ENCODE measurements at regions of chr7 and their contacts with region 1.

Region 1: DNA sequence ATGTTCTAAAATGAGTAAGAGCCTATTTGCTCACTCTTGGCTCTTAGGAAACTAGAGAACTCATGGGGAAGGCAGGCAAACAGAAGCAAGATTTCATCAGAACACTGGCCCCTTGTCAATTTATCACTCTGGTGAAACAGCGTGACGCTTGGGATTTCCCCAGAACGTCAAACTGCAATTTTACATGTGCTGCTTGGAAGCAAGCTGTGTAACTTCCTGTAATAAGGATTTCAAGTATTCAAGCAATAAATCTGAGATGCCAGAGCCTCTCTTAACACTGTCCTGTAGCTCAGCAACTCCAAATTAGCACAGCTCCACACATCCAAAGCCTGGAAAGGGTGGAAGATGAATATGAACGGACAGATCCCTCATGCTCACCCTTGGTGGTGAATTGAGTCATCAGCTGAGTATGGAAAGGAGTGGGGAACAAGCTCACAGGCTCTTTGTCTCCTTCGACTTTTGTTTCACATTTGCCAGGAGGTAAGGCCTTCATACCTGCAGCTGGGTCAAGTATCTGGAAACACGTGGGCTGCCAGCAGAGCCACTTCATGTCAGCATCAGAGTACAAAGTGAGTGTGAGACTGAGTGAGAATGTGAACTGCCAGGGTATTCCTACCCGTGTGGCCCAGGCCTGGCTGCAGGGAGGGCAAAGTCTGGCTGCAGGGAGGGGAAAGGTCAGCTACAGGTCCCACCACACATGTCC is 140.4 kb upstream of the NAMPT start:
- DNase-seq: peak in 1 of 2 donors; percentile 99
- H3K4me3 ChIP-seq: no peak overlapping the region
- H3K27ac ChIP-seq: peak overlapping the region; percentile 66
- H3K4me1 ChIP-seq: peaks cover 41% of the 10 kb centered on the region
- H3K27me3 ChIP-seq: no peaks in the 10 kb centered on the region
- CTCF ChIP-seq: no peak
- POLR2A ChIP-seq: no peak

Region 2: DNA sequence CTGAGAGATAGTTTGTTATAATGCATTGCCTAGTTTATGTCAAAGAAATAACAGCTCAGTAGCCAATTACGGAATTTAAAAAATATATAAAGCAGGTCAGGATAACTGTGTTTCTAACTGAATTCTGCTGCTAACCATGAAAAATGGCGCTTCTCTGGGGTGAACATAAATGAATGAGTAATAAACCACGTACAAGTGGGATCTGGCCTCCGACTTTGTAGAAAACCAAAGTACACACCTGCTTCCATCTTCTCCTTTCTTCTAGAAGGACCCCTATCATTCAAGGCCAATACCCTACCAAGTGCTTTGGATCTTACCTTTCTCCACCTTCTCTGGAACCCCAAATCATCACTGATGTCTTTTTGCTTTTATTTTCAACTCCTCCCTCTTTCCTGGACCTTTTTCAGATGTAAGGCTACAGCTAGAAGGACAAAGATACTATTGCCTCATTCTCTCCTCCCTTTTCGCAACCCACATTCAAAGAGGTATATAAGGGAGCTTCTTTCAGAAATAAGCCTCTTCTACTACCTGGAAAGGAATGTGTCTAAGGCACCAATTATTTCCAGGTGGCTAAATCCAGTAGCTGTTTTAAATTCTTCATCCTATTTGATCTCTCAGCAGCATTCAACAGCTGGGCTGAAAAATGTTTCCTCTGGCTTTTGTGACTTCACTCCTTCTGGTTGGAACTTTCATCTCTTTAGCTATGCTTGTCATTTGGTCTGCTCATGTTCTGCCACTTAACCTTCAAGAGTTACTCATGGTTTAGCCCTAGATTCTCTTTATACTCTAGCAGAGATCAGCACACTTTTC is 178.1 kb before region 1 on chr7:
- intact Hi-C with region 1: no loop called
- DNase-seq: no peak
- H3K4me3 ChIP-seq: no peak overlapping the region
- H3K27ac ChIP-seq: no peak overlapping the region
- H3K4me1 ChIP-seq: no peaks in the 10 kb centered on the region
- H3K27me3 ChIP-seq: no peaks in the 10 kb centered on the region
- CTCF ChIP-seq: no peak
- POLR2A ChIP-seq: no peak

Region 3: DNA sequence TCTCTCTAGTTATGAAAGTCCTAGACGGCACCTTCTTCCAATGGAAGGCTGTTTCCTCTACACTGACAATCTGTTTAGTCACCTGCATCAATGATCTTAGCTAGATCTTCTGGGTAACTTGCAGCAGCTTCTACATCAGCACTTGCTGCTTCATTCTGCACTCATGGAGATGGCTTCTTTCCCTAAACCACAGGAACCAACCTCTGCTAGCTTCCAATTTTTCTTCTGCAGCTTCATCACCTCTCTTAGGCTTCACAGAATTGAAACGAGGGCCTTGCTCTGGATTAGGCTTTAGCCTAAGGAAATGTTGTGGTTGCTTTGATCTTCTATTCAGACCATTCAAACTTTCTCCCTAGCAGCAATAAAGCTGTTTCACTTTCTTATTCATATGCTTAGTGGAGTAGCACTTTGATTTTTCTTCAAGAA is 165.0 kb before region 1 on chr7:
- intact Hi-C with region 1: no loop called
- DNase-seq: no peak
- H3K4me3 ChIP-seq: no peak overlapping the region
- H3K27ac ChIP-seq: no peak overlapping the region
- H3K4me1 ChIP-seq: no peaks in the 10 kb centered on the region
- H3K27me3 ChIP-seq: no peaks in the 10 kb centered on the region
- CTCF ChIP-seq: no peak
- POLR2A ChIP-seq: no peak

Region 4: GRCh38 chr7:106285051-106285854 is 139.9 kb before region 1 on chr7:
- intact Hi-C with region 1: loop called (anchors 2 kb)
- DNase-seq: peak; percentile 99
- H3K4me3 ChIP-seq: peak overlapping the region; percentile 82 to 87
- H3K27ac ChIP-seq: peak overlapping the region; percentile 98
- H3K4me1 ChIP-seq: peaks cover 44% of the 10 kb centered on the region
- H3K27me3 ChIP-seq: no peaks in the 10 kb centered on the region
- CTCF ChIP-seq: no peak
- POLR2A ChIP-seq: peak in 1 of 2 donors; percentile 41

Region 5: GRCh38 chr7:106346678-106347217 is 78.4 kb before region 1 on chr7:
- intact Hi-C with region 1: loop called (anchors 10 kb)
- DNase-seq: no peak
- H3K4me3 ChIP-seq: no peak overlapping the region
- H3K27ac ChIP-seq: no peak overlapping the region
- H3K4me1 ChIP-seq: peaks cover 8% of the 10 kb centered on the region
- H3K27me3 ChIP-seq: no peaks in the 10 kb centered on the region
- CTCF ChIP-seq: no peak
- POLR2A ChIP-seq: no peak

Region 6: GRCh38 chr7:106493041-106493731 is 68.0 kb after region 1 on chr7:
- intact Hi-C with region 1: no loop called
- DNase-seq: no peak
- H3K4me3 ChIP-seq: no peak overlapping the region
- H3K27ac ChIP-seq: no peak overlapping the region
- H3K4me1 ChIP-seq: no peaks in the 10 kb centered on the region
- H3K27me3 ChIP-seq: no peaks in the 10 kb centered on the region
- CTCF ChIP-seq: no peak
- POLR2A ChIP-seq: no peak